AG04450 (cell line): ENCODE measurements at regions of chr14 and their contacts with region 1.

Region 1: GRCh38 chr14:81170104-81170828 is 50.5 kb downstream of the GTF2A1 start:
- DNase-seq: peak; percentile 67
- H3K4me3 ChIP-seq: peak overlapping the region; percentile 78
- H3K27ac ChIP-seq: peak overlapping the region; percentile 96
- H3K27me3 ChIP-seq: no peaks in the 10 kb centered on the region
- CTCF ChIP-seq: peak; percentile 95

Region 2: GRCh38 chr14:80954687-80955299 is 215.5 kb before region 1 on chr14:
- CTCF ChIA-PET with region 1: interaction called, 26 read pairs
- POLR2A ChIA-PET with region 1: no interaction called
- DNase-seq: peak; percentile 42
- H3K4me3 ChIP-seq: peak overlapping the region; percentile 71
- H3K27ac ChIP-seq: no peak overlapping the region
- H3K27me3 ChIP-seq: peaks cover 8% of the 10 kb centered on the region
- CTCF ChIP-seq: peak; percentile 85

Region 3: GRCh38 chr14:81147140-81147897 is 22.9 kb before region 1 on chr14:
- CTCF ChIA-PET with region 1: interaction called, 13 read pairs
- POLR2A ChIA-PET with region 1: no interaction called
- DNase-seq: no peak
- H3K4me3 ChIP-seq: no peak overlapping the region
- H3K27ac ChIP-seq: no peak overlapping the region
- H3K27me3 ChIP-seq: no peaks in the 10 kb centered on the region
- CTCF ChIP-seq: no peak

Region 4: GRCh38 chr14:81187832-81188522 is 17.7 kb after region 1 on chr14:
- CTCF ChIA-PET with region 1: interaction called, 103 read pairs
- POLR2A ChIA-PET with region 1: no interaction called
- DNase-seq: no peak
- H3K4me3 ChIP-seq: no peak overlapping the region
- H3K27ac ChIP-seq: no peak overlapping the region
- H3K27me3 ChIP-seq: no peaks in the 10 kb centered on the region
- CTCF ChIP-seq: no peak

Region 5: GRCh38 chr14:81220830-81221578 is 50.7 kb after region 1 on chr14 and contains the start of gene GTF2A1:
- CTCF ChIA-PET with region 1: interaction called, 7 read pairs
- POLR2A ChIA-PET with region 1: interaction called, 16 read pairs
- DNase-seq: peak; percentile 90
- H3K4me3 ChIP-seq: peak within 1 kb of the TSS; percentile 89
- H3K27ac ChIP-seq: peak within 1 kb of the TSS; percentile 100
- H3K27me3 ChIP-seq: no peaks in the 10 kb centered on the region
- CTCF ChIP-seq: no peak
- polyA plus RNA-seq, gene GTF2A1: 22.9 and 24.5 TPM in 2 replicates

Region 6: DNA sequence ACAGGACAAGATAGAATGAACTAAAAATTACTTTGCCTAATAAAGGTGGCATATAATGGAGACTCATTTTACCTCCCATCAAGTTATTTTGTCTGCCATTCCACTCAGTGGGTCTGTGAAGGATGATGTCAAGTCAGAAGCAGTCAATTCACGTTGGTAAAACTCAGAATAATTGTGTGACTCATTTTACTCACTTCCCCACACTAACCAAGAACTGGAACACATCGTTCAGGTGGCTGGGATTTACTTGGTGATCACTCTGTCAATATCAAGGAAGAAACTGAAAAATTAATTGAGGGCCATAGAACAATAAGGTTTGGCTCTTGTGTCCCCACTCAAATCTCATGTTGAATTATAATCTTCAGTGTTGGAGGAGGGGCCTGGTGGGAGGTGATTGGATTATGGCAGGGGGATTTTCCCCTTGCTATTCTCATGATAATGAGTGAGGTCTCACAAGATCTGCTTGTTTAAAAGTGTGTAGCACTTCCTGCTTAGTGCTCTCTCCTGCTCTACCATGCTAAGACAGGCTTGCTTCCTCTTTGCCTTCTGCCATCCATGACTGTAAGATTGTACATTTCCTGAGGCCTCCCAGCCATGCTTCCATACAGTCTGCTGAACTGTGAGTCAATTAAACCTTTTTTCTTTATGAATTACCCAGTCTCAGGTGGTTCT is 86.2 kb after region 1 on chr14:
- CTCF ChIA-PET with region 1: no interaction called
- POLR2A ChIA-PET with region 1: no interaction called
- DNase-seq: no peak
- H3K4me3 ChIP-seq: no peak overlapping the region
- H3K27ac ChIP-seq: no peak overlapping the region
- H3K27me3 ChIP-seq: no peaks in the 10 kb centered on the region
- CTCF ChIP-seq: no peak